ENCODE measurements at regions of chr1 and their contacts with region 1.

Region 1: DNA sequence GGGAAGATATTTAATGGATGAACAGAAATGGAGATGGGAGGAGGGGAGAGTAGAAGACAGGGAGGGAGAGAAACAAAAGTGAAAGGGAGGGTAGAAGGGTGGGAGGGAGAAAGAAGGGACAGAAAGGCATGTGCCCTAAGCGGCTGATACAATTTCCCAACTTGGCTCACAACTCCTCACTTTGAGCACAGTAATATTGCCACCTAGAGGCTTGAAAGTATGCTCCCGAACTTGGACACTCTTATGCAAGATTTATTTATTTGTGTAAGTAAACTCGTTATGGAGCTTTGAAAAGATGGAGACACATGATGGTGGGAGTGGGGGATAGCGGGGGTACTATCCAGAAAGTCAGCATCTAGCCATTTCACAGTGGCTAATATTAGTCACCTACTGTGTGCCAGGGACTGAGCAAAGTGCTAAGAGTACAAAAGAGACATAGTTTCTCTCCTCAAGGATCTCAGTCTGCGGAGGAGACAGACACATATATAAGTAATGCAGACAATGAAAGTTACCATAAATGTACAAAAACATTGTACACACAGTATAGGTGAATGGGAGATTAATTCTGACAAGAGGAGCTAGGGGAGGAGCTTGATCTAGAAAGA is 189.7 kb downstream of the SEC16B start:
- DNase-seq: no peak
- ATAC-seq: peak; percentile 53 to 57

Region 2: GRCh38 chr1:177256153-177257075 is 523.8 kb before region 1 on chr1:
- intact Hi-C with region 1: loop called in 1 of 2 experiments (anchors 10 kb)
- DNase-seq: peak; percentile 65
- ATAC-seq: peak; percentile 90 to 93

Region 3: DNA sequence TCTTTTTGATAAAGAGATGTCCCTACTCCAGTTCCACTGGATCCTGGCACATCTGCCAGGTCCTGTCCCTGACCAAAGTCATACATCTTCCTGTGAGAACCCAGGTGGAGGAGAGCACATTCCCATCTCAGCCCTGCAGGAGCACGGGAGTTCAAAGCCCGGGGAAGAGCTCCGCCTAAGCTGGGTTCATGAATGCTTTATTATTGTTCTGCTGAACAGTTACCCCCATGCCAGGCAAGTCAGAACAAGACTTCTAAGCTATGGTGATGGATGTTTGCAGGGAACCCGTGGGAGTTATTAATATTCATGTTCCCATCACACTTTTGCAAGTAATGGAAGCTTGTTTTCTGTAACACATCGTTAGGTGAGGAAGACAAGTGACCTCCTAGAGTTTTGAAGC is 126.8 kb after region 1 on chr1:
- intact Hi-C with region 1: loop called in 1 of 2 experiments (anchors 5 kb)
- DNase-seq: no peak
- ATAC-seq: no peak

Measured in left cardiac atrium (tissue), 4 donors.